OCI-LY7 (cell line): ENCODE measurements at regions of chr11 and their contacts with region 1.

Region 1: DNA sequence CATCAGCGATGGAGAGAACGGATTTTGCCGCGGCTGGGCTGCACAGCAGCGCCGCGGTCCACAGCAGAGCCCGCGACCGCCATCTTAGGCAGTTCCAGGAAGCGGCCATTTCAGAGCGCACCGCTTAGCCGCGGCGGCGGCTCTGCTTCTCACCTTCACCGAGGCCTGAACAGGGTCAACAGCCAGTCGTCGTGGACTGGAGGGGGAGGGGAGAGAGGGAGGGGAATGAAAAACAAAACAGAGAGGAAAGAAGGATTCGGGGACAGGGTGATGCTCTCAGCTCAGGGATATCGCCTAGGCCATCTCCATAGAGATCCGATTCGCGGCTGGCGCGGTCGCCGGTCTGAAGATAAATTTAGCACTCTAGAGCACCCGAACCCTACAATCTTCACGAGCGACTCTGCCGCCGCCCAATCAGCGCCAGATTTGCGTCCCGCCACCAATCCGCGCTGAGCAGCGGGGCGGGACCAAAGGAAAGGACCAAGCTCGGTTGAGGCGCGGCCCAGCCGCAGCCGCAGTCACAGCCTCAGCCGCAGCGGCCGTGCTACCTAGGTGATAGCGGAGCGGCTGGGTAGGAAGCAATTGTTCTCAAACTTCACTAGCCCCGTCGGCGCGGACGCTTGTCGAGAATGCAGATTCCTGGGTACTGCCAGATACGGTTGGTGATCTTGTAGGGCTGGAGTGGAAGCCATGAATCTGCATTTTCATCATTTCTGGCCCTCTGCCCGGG is at the start of gene ZBED5:
- DNase-seq: peak; percentile 97
- H3K4me3 ChIP-seq: peak within 1 kb of the TSS; percentile 85
- H3K27ac ChIP-seq: peak within 1 kb of the TSS; percentile 81
- H3K4me1 ChIP-seq: peaks cover 22% of the 10 kb centered on the region
- CTCF ChIP-seq: no peak
- total RNA-seq, gene ZBED5: 37.6 and 42.1 TPM in 2 replicates

Region 2: DNA sequence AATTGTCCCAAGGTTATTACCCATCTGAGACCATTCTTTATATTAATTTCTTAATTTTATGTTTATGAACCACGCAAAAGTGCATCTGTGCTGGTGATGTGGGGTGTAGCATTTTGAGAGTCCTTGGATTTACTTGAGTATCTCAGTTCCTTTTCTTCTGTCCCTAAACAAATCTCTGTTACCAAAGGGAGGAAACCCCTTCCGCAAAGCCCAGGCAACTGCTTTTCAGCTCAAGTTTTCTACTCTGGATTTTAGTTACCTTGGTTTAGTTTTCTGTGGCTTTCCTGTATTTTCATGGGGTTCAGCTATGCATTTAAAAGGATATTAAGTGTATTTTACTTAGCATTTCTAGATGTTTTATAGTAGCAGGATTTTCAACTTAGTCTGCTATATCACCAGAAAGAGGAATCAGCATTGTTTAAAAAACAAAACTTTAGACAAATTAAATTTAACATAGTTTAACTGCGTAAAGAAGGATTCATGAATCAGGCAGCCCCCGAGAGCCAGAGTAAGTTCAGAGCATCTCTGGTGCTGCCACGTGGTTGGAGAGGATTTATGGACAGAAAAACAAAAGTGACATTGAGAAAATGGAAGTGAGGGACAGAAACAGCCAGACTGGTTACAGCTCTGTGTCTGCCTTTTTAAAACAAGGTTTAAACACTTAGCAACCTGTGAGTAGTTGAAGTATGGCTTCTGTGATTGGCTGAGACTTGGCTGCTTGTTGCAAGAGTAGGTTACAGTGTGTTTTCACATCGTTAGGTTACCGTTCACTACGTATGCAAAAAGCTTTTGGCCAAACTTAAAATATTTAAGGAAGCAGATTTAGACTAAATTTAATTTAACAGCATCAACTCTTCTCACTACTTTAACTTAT is 543.4 kb before region 1 on chr11:
- CTCF ChIA-PET with region 1: no interaction called
- POLR2A ChIA-PET with region 1: no interaction called
- intact Hi-C with region 1: loop called (anchors 10 kb)
- DNase-seq: peak; percentile 92
- H3K4me3 ChIP-seq: peak overlapping the region; percentile 50
- H3K27ac ChIP-seq: peak overlapping the region; percentile 93
- H3K4me1 ChIP-seq: peaks cover 96% of the 10 kb centered on the region
- CTCF ChIP-seq: no peak

Region 3: DNA sequence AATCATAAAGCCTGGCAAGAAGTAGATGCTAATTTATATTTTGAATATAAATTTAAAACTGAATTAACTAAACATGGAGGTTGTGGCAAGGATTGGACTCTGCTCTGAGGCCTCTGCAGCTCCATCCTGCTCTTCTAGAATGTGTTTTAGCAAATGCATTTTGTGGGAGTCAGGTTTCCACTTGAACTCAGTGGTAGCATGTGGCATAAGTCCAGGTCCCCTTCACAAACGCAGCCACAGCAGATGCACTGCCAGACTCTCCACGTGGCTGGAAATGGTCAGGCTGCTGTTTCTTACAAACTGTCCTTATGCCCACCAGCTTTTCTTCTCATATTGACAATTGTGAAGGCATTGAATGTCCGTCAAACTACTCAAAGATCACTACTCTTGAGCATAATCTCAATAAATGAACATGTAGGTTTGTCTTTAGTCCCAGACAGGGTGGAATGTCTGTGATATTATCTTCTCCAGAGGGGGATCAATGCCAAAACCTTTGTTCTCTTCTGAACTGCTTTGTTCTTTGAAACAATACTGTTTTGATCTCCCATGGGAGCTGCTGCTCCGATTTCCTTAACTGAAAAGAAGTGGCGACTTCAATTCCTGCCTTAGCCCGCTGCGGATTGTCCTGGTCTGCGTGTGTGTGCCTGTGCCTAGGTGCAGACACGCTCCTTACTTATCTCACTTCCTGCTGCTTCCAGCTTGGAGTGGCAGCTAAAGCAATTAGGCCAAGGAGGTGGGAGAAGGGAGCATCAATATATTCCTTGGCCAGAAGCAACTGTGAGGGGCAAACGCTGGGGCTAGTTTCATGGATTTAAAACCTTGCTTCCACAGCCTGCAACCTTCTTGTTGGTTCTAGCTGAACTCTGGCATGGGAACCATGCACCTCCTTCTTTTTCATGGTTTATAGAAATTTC is 73.4 kb before region 1 on chr11:
- CTCF ChIA-PET with region 1: no interaction called
- POLR2A ChIA-PET with region 1: no interaction called
- intact Hi-C with region 1: no loop called
- DNase-seq: no peak
- H3K4me3 ChIP-seq: no peak overlapping the region
- H3K27ac ChIP-seq: no peak overlapping the region
- H3K4me1 ChIP-seq: no peaks in the 10 kb centered on the region
- CTCF ChIP-seq: no peak

Region 4: DNA sequence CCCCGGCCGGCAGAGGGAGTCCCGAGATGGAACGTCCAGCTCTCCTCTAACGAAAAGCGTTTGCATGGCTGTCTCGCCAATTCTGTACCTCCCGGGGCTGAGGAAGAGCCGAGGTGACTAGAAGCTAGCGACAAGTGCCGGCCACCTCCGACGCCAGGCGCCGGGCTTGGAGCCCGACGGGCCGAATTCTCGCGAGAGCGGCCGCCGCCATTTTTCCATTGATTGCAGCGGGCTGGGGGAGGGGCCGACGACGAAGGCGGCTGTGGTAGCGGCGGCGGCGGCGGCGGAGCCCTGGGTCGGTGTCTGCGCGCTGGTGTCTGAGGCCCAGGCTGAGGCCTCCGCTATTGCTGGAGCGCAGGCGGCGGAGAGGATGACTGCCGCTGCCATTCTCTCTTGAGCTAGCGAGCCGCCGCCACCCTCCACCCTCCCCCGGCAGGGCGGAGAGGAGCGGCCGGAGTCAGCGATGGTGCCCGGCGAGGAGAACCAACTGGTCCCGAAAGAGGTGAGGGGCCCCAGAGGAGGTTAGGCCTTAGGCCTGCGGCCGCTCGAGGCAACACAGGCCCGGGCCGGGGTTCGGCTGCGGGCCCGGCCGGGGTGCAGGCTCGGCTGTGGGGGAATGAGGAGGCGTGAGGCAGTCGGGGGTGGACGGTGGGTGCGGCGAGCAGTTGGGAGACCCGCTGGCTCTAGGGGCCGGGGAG is 984.0 kb after region 1 on chr11 and contains the start of gene USP47:
- CTCF ChIA-PET with region 1: no interaction called
- POLR2A ChIA-PET with region 1: no interaction called
- intact Hi-C with region 1: loop called (anchors 5 kb)
- DNase-seq: peak; percentile 90
- H3K4me3 ChIP-seq: peak within 1 kb of the TSS; percentile 86
- H3K27ac ChIP-seq: peak within 1 kb of the TSS; percentile 83
- H3K4me1 ChIP-seq: peaks cover 21% of the 10 kb centered on the region
- CTCF ChIP-seq: peak; percentile 64
- total RNA-seq, gene USP47: 35.2 and 44.1 TPM in 2 replicates